ENCODE measurements at regions of chr17 and their contacts with region 1.

Region 1: DNA sequence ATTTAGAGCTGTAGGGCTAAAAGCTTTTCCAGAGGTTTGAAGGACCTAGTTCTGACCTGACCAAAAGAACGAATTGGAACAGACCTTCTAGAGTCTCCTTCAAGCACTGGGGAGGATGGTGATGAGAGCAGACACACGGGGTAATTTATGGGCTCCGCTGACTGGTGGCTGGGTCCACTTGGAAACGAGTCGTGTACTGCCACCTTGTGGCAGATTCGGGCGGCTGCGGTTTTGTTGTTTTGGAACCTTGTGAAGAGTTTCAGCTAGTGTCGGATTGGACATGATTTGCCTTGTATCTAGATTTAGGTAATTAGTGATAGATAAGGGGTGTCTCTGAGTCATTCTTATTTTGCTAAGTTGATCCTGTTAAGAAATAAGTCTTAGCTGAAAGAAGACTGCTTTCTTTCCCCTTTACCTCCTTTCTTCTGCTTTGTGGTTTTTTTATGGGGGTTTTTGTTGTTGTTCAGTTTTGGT is 98.9 kb downstream of the AATF start:
- DNase-seq: peak; percentile 64 to 66
- ATAC-seq: peak in 6 of 8 donors; percentile 61 to 83 (median 70)
- H3K4me3 ChIP-seq: no peak overlapping the region
- H3K27ac ChIP-seq: no peak overlapping the region
- H3K4me1 ChIP-seq: no peaks in the 10 kb centered on the region
- H3K27me3 ChIP-seq: no peaks in the 10 kb centered on the region
- CTCF ChIP-seq: peak; percentile 77 to 92 (median 88)

Region 2: DNA sequence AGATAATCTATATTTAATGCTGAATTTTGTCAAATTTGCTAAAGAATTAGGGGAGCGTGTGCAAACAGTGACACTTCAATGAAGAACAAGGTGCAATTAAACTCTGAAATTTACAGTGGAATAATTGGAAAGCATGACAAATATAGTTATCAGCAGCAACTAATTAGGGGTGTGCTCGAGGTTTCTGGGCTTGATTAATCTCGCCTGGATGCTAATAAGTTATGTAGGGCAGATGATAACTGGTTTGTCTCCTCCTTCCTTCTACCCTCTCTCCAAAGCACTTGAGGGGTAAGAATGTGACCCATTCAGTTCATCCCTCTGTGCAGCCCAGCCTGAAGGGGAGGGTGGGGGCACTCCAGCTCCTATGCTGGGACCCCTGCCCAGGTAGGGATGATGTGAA is 424.4 kb before region 1 on chr17:
- intact Hi-C with region 1: loop called in 2 of 10 experiments (anchors 2 to 5 kb)
- DNase-seq: no peak
- ATAC-seq: no peak
- H3K4me3 ChIP-seq: no peak overlapping the region
- H3K27ac ChIP-seq: no peak overlapping the region
- H3K4me1 ChIP-seq: no peaks in the 10 kb centered on the region
- H3K27me3 ChIP-seq: peaks cover 0 to 13% (median 3%) of the 10 kb centered on the region in 7 donors
- CTCF ChIP-seq: no peak

Region 3: DNA sequence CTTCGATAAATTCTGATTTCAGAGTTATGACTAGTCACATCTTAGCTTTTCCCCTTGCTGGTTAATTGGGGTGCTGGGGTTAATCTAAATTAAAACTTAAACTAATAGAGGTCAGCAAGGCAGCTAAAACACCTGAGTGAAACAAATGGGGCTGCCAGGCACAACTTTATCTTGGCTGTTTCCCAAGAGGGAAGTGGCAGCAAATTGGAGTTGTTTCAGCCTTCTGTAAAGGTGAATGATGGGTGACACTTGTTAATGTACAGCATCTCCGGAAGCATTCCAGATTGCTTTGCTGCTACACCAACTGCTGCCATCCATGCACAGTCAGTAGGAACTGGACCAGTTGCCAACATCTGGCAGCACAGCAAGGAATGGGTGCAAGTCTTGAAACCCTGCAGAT is 55.0 kb before region 1 on chr17:
- intact Hi-C with region 1: loop called in 1 of 10 experiments (anchors 2 kb)
- DNase-seq: no peak
- ATAC-seq: no peak
- H3K4me3 ChIP-seq: no peak overlapping the region
- H3K27ac ChIP-seq: no peak overlapping the region
- H3K4me1 ChIP-seq: no peaks in the 10 kb centered on the region
- H3K27me3 ChIP-seq: no peaks in the 10 kb centered on the region
- CTCF ChIP-seq: no peak

Measured in heart right ventricle (tissue), 16 donors.